ENCODE measurements at regions of chr11 and their contacts with region 1.

Region 1: GRCh38 chr11:78645226-78646202 is 70.8 kb upstream of the NARS2 start:
- DNase-seq: peak; percentile 59
- H3K4me3 Mint-ChIP-seq: no peak overlapping the region
- H3K27ac Mint-ChIP-seq: no peak overlapping the region
- H3K4me1 Mint-ChIP-seq: peaks cover 8% of the 10 kb centered on the region
- H3K27me3 Mint-ChIP-seq: peaks cover 2% of the 10 kb centered on the region

Region 2: GRCh38 chr11:78657968-78658839 is 12.7 kb after region 1 on chr11:
- CTCF ChIA-PET with region 1: interaction called, 16 read pairs
- POLR2A ChIA-PET with region 1: no interaction called
- DNase-seq: no peak
- H3K4me3 Mint-ChIP-seq: no peak overlapping the region
- H3K27ac Mint-ChIP-seq: no peak overlapping the region
- H3K4me1 Mint-ChIP-seq: no peaks in the 10 kb centered on the region
- H3K27me3 Mint-ChIP-seq: peaks cover 4% of the 10 kb centered on the region

Region 3: GRCh38 chr11:78715639-78716311 is 70.3 kb after region 1 on chr11:
- CTCF ChIA-PET with region 1: interaction called, 10 read pairs
- POLR2A ChIA-PET with region 1: no interaction called
- DNase-seq: peak; percentile 45
- H3K4me3 Mint-ChIP-seq: no peak overlapping the region
- H3K27ac Mint-ChIP-seq: no peak overlapping the region
- H3K4me1 Mint-ChIP-seq: no peaks in the 10 kb centered on the region
- H3K27me3 Mint-ChIP-seq: peaks cover 14% of the 10 kb centered on the region

Measured in activated CD4-positive, alpha-beta T cell treated with anti-CD3 and anti-CD28 coated beads, Interleukin-2, amount 10 ng/mL, durations not matched to agents 7 days and 5 days (primary cell).